GM12878 (cell line): ENCODE measurements at regions of chr15 and their contacts with region 1.

Region 1: DNA sequence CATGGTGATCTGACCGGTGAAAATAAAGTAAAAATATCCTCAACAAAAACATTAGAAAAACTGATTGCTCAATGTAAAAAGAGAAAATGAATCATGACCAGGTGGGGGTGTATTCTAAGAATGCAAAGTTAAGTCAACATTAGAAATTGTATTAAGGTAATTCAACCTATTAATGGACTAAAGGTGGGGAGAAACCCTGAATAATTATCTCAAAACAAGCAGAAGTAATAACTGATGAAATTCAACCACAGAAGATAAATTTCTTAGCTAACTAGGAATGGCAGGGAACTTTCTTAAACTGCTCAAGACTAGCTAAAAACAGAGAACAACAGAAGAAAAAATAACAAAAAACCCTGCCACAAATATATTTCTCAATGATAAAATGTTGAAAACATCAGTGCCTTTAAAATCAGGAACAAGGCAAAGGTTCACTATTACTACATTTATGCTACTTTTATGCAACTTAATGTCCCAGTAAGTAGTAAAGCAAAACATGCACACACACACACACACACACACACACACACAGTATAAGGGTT is 204.4 kb upstream of the THBS1 start:
- DNase-seq: no peak
- ATAC-seq: no peak
- H3K4me3 ChIP-seq: no peak overlapping the region
- H3K27ac ChIP-seq: no peak overlapping the region
- H3K4me1 ChIP-seq: no peaks in the 10 kb centered on the region
- H3K27me3 ChIP-seq: no peaks in the 10 kb centered on the region
- CTCF ChIP-seq: no peak
- EP300 ChIP-seq: no peak
- POLR2A ChIP-seq: no peak
- RAD21 ChIP-seq: no peak

Region 2: GRCh38 chr15:39312984-39313383 is 63.5 kb before region 1 on chr15:
- CTCF ChIA-PET with region 1: no interaction called
- POLR2A ChIA-PET with region 1: no interaction called
- RAD21 ChIA-PET with region 1: no interaction called
- SMC1A ChIA-PET with region 1: no interaction called
- in situ Hi-C with region 1: no loop called
- intact Hi-C with region 1: loop called (anchors 10 kb)
- DNase-seq: no peak
- ATAC-seq: peak; percentile 88
- H3K4me3 ChIP-seq: no peak overlapping the region
- H3K27ac ChIP-seq: no peak overlapping the region
- H3K4me1 ChIP-seq: no peaks in the 10 kb centered on the region
- H3K27me3 ChIP-seq: no peaks in the 10 kb centered on the region
- CTCF ChIP-seq: peak; percentile 13 to 27 (median 27); a peak in 3 of 6 replicates
- EP300 ChIP-seq: no peak
- POLR2A ChIP-seq: no peak
- RAD21 ChIP-seq: peak; percentile 47